ENCODE measurements at regions of chr1 and their contacts with region 1.

Region 1: DNA sequence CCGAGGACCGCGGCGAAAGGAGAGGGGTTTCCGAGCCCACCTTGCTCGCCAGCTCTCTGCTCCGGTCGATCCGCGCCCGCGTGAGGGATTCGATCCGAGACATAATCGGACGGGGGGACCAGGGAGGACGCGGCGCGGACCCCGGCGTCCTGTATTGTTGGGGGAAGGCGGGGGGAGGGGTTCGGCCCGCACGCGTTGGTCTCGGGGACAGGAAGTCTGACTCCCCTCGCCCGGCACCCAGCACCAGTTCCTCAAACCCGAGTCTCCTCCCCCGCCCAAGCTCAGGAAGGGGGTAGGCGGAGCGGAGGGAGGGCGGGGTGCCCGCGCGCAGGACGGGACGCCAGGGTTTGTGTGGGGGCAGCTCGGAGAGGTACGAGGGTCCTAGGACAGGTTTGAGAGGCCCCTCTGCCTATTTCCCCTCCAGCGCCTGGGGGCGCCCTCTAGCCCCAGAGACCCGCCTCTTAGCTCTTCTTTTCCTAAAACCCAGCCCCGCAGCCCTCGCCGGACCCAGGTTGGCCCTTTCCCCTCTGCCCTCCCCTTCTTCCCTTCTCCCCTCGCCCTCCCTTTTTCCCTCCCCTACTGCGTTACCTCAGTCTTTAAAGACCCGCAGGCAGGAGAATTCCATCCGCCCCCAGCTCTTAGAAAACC is at the start of gene ARHGEF2:
- DNase-seq: peak; percentile 71
- H3K4me3 Mint-ChIP-seq: peak within 1 kb of the TSS; percentile 92
- H3K27ac Mint-ChIP-seq: peak within 1 kb of the TSS; percentile 95
- H3K4me1 Mint-ChIP-seq: peaks cover 78% of the 10 kb centered on the region
- H3K27me3 Mint-ChIP-seq: no peaks in the 10 kb centered on the region
- total RNA-seq, gene ARHGEF2: 221 and 222 TPM in 2 replicates

Region 2: DNA sequence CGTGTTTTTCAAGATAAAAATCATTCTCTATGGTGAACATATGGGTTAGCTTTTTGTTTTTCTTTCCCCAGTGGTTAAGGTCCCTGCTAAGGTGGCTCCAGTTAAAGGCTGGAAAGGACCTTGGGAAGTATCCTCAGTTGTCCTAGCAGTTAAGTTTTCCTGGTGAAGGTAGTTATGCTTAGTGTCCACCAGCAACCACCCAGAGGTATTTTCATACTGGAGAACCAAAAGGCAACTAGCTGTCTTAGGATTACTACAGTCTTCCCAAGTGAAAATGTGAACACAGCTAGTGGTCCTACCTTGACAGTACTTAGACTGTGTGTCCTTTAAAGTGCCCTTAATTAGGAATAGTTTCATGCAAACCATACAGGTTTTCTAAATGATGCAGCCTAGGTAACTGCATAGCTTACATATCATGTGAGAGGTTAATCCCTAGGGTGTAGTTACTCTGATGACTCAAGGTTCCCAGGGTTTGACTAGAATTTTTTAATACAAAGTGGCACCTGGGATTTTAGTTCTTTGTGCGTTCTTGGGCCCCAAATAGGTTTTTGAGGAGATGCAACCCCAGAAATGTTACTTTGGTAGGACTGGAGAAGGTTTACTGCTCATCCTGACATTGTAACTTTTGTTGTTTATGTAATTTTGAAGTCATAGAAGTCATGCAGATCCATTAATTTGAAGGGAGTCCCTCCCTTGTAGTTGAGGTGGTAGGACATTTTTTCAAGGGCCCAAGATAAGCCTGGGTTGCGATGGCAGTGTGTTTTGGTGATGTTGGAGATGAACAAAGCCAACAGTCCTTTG is 326.4 kb before region 1 on chr1:
- intact Hi-C with region 1: no loop called
- DNase-seq: no peak
- H3K4me3 Mint-ChIP-seq: no peak overlapping the region
- H3K27ac Mint-ChIP-seq: no peak overlapping the region
- H3K4me1 Mint-ChIP-seq: no peaks in the 10 kb centered on the region
- H3K27me3 Mint-ChIP-seq: peaks cover 3% of the 10 kb centered on the region

Region 3: DNA sequence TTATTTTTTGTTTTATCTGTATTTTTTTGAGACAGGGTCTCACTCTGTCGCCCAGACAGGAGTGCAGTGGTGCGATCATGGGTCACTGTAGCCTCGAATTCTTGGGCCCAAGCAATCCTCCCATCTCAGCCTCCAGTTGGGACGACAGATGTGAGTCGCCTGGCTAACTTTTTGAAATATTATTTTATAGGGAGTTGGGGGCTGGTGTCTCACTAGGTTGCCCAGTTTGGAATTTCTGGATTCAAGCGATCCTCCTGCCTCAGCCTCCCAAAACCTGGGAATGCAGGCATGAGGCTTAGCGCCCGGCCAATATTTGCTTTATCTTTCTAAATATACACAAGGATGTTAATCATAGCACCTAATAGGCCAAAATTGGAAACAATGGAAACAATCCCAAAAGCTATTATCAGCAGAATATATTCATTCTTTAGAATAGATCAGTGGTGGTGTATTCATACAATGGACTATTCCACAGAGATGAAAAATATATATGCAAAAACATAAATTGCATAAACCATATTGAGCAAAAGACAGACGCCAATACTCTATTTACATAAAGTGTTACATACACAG is 233.7 kb before region 1 on chr1:
- intact Hi-C with region 1: loop called (anchors 2 kb)
- DNase-seq: no peak
- H3K4me3 Mint-ChIP-seq: peak overlapping the region; percentile 99
- H3K27ac Mint-ChIP-seq: peak overlapping the region; percentile 95
- H3K4me1 Mint-ChIP-seq: peaks cover 12% of the 10 kb centered on the region
- H3K27me3 Mint-ChIP-seq: no peaks in the 10 kb centered on the region

Region 4: DNA sequence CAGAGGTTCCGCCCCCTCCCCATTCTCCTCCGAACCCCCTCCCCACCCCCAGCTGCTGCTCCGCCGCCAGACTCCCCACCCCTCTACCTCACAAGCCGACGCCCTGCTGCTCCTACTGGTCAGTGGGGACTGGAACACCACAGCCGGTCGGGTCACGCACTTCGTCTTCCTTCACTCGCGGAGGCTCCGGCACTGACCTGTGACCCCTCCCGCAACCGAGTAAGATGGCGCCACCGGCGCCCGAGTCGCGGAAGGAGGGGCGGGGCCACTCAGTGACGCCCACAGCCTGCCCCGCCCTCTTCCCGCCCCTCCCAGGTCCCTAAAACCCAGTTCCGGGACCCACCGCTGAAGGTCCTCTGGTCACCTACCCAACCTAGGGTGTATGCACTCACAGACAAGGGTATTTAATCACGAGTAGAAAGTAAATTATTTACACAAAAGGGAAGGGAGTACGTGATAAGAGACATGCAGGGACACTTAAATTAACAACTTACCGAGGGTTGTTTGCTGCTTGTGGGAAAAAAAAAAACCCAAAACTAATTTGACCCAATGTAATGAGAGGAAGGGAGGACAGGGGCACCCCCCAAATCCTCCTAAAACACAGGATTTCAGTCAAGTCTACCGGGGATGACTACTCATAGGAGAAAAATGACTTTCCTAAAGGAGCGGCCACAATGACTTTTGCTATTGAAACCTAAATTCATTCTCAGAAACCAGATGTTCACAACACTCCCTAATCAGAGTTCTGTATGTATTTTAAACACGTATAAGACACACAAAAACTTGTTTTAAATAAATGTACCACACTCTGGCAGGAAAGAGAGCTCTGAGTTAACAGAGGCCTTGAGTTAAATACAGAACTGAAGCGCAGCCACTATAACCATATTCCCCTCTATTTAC is 67.0 kb before region 1 on chr1 and contains the start of gene RIT1:
- intact Hi-C with region 1: loop called (anchors 1 kb)
- DNase-seq: peak; percentile 81
- H3K4me3 Mint-ChIP-seq: peak within 1 kb of the TSS; percentile 98
- H3K27ac Mint-ChIP-seq: peak within 1 kb of the TSS; percentile 97
- H3K4me1 Mint-ChIP-seq: peaks cover 23% of the 10 kb centered on the region
- H3K27me3 Mint-ChIP-seq: peaks cover 2% of the 10 kb centered on the region
- total RNA-seq, gene RIT1: 20.2 and 22.3 TPM in 2 replicates

Region 5: DNA sequence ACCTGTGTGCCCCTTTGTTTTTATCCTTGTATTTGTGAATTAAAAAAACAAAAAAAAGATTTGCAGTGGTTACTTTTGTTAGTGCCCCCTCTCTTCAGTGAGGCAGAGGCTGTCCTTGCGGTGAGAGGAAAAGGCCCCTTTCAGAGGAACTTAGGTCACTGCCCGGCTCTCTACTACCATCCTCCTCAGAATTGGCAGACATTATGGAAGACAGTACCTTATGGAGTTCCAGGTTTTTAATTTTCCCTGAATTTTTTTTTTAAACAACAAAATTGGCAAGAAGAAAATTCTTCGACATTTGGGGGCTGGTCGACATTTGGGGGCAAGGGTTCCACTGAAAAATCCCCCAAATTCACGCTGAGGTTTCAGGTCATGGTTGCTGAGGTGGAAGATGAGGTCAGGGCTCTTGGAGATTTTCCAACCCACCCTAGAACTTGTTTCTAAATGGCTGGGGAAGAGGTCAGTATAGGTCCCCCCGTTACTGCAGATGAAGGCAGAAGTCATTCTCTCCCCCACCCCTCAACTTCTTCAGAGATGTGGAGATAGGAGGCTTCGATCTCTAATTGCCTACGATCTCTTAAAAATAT is 31.7 kb before region 1 on chr1:
- intact Hi-C with region 1: loop called (anchors 1 kb)
- DNase-seq: no peak
- H3K4me3 Mint-ChIP-seq: peak overlapping the region; percentile 59
- H3K27ac Mint-ChIP-seq: peak overlapping the region; percentile 86
- H3K4me1 Mint-ChIP-seq: peaks cover 40% of the 10 kb centered on the region
- H3K27me3 Mint-ChIP-seq: no peaks in the 10 kb centered on the region

Region 6: DNA sequence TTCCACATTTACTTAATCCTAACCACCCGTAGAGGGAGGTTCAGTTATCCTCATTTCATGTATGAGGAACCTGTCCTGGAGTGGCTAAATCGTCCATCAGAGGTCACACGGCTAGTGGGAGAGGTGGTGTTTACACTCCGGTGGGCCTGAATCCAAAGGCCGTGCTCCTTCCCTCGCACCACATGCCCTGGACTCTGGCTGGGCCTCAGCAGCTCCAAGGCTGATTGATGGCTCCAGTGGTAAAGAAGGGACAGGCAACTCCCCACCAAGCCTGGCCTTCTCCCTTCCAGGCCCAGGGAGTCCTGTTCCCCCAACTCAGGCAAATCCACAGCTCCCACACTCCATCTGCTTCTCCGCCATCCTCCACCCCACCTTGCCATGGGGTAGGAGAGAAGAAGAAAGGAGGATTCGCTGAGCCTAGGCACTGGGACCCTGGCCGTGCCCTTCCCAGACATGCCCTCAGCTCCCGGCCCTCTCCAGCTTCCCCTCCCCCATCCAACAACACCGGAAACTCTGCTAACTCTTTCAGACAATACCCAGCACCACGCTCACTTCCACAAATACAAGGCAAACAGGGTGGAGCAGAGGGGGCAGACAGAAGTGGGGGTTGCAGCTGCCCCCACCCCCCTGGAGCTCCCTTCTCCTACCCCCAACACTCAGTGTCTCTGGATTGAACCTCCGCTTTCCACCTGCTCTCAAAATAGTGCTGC is 11.0 kb before region 1 on chr1:
- intact Hi-C with region 1: loop called (anchors 1 kb)
- DNase-seq: no peak
- H3K4me3 Mint-ChIP-seq: peak overlapping the region; percentile 77
- H3K27ac Mint-ChIP-seq: peak overlapping the region; percentile 83
- H3K4me1 Mint-ChIP-seq: peaks cover 66% of the 10 kb centered on the region
- H3K27me3 Mint-ChIP-seq: no peaks in the 10 kb centered on the region

Region 7: GRCh38 chr1:155989242-155990004 is 11.0 kb after region 1 on chr1:
- intact Hi-C with region 1: loop called (anchors 1 kb)
- DNase-seq: peak; percentile 77
- H3K4me3 Mint-ChIP-seq: no peak overlapping the region
- H3K27ac Mint-ChIP-seq: no peak overlapping the region
- H3K4me1 Mint-ChIP-seq: peaks cover 18% of the 10 kb centered on the region
- H3K27me3 Mint-ChIP-seq: no peaks in the 10 kb centered on the region

Region 8: DNA sequence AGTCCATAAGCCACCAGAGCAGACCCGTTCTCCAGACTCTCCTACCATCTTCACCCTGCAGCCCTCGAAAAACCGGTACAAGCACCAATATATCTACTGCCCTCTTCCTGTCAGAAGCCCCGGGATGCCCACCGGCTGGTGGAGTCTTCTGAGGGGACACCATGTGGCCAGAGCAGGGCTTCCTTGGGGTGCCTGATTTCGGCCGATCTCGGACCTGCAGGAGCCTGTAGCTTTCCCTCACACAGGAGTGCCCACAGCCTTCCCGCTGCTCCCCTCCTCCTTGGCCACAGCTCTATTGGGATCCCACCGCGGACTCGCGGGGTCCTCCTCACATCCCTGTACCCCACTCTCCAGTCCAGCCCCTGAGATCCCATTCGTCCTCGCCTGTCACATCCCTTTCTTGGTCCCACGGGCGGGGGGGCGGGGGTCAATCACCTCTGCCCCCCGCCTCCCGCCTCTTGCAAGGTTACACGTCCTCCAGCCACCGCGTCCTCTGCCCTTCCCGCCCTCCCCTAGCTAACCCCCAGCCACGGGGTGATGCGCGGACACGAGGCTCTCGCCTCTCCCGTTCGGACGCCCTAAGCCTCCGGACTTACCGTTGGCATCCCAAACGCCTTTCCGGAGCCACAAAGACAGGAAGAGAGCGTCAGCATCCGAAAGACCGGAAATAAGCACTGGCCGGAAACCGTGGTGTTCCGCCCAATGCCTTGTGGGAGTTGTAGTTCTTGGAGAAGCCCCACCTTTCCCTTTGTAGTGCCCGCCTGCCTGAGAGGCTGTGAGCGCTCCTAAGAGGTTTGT is 42.0 kb after region 1 on chr1 and contains the start of gene SSR2:
- intact Hi-C with region 1: loop called (anchors 1 kb)
- DNase-seq: peak; percentile 85
- H3K4me3 Mint-ChIP-seq: peak within 1 kb of the TSS; percentile 98
- H3K27ac Mint-ChIP-seq: peak within 1 kb of the TSS; percentile 94
- H3K4me1 Mint-ChIP-seq: peaks cover 29% of the 10 kb centered on the region
- H3K27me3 Mint-ChIP-seq: peaks cover 4% of the 10 kb centered on the region
- total RNA-seq, gene SSR2: 195 TPM in 2 replicates